ENCODE measurements at regions of chr7 and their contacts with region 1.

Region 1: DNA sequence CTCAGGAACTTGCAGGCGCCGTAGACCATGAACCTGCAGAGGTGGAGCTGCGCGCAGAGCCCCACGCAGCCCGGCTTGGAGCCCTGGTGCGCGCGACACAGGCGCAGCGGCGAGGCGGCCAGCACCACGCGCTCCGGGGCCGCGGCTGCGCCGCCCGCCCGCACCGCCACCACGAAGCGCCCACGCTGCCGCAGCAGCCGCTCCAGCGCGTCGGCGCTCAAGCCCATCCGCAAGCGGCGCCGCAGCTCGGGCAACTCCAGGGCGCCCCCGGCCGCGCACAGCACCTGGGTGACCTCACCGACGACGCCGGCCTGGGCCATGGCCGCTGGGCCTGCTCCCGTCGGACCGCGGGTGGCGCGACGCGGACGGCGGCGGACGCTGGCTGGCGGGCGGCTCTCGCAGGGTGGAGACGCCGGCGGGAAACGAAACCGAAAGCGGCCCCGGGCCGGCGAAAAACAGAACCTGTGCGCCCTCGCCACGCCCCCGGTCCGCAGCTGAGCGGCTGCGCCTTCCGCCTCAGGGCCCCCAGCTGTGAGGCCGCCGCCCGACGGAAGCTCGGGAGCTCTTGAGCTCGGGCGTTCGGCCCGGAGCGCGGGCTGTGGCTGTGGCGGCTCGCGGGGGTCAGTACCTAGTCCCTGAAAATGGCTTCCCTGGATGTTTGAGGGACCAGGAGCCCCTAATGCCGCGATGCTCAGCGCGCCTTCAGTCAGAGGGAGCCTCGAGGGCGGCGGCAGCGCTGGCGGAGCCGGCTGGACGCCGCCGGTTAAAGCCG is at the start of gene PARP12:
- DNase-seq: peak; percentile 88
- H3K4me3 Mint-ChIP-seq: peak within 1 kb of the TSS; percentile 82
- H3K27ac Mint-ChIP-seq: peak within 1 kb of the TSS; percentile 91
- H3K4me1 Mint-ChIP-seq: peaks cover 43% of the 10 kb centered on the region
- H3K27me3 Mint-ChIP-seq: peaks cover 5% of the 10 kb centered on the region
- total RNA-seq, gene PARP12: 62.0 and 63.7 TPM in 2 replicates

Region 2: GRCh38 chr7:140084972-140085371 is 22.3 kb after region 1 on chr7:
- intact Hi-C with region 1: loop called (anchors 2 kb)
- DNase-seq: peak; percentile 36
- H3K4me3 Mint-ChIP-seq: peak overlapping the region; percentile 9
- H3K27ac Mint-ChIP-seq: peak overlapping the region; percentile 76
- H3K4me1 Mint-ChIP-seq: peaks cover 39% of the 10 kb centered on the region
- H3K27me3 Mint-ChIP-seq: no peaks in the 10 kb centered on the region

Region 3: GRCh38 chr7:140304191-140304799 is 241.6 kb after region 1 on chr7:
- intact Hi-C with region 1: loop called (anchors 5 kb)
- DNase-seq: peak; percentile 27
- H3K4me3 Mint-ChIP-seq: no peak overlapping the region
- H3K27ac Mint-ChIP-seq: peak overlapping the region; percentile 78
- H3K4me1 Mint-ChIP-seq: peaks cover 21% of the 10 kb centered on the region
- H3K27me3 Mint-ChIP-seq: no peaks in the 10 kb centered on the region

Region 4: DNA sequence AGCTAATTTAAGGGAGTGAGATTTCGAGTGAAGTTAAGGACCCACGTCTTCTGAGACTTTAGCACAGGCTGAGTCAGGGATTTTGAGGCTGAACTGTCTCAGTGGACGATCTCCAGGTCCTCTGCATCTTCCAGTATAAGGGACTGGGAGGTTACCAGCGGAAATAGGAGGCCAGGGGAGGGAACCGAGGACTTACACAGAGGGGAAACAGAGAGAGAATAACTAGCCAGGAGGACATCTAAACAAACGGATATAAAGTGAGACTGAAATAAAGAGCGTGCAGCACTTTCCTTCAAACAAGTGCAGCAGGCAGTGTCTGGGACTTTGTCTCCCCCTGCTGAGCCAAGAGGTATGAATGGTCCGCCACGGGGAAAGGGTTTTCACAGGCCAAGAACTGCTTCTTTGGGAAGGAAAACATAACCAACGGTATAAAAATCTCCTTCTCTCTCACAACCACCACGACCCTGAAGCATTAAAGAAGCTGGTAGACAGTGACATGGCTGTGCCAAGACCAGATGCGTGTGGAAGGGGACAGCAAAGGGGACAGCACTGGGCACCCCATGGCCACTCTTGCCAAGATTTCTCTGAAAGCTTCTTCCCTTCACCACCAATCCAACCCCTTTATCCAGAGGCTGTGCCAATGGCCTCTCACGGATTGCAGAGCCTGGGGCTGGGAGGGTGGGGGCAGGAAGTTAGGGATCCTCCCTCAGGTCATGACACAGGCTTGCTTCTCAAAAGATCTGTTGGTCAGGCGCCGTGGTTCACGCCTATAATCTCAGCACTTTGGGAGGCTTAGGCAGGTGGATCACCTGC is 263.6 kb after region 1 on chr7:
- intact Hi-C with region 1: loop called (anchors 5 kb)
- DNase-seq: peak; percentile 36
- H3K4me3 Mint-ChIP-seq: no peak overlapping the region
- H3K27ac Mint-ChIP-seq: no peak overlapping the region
- H3K4me1 Mint-ChIP-seq: no peaks in the 10 kb centered on the region
- H3K27me3 Mint-ChIP-seq: no peaks in the 10 kb centered on the region

Region 5: DNA sequence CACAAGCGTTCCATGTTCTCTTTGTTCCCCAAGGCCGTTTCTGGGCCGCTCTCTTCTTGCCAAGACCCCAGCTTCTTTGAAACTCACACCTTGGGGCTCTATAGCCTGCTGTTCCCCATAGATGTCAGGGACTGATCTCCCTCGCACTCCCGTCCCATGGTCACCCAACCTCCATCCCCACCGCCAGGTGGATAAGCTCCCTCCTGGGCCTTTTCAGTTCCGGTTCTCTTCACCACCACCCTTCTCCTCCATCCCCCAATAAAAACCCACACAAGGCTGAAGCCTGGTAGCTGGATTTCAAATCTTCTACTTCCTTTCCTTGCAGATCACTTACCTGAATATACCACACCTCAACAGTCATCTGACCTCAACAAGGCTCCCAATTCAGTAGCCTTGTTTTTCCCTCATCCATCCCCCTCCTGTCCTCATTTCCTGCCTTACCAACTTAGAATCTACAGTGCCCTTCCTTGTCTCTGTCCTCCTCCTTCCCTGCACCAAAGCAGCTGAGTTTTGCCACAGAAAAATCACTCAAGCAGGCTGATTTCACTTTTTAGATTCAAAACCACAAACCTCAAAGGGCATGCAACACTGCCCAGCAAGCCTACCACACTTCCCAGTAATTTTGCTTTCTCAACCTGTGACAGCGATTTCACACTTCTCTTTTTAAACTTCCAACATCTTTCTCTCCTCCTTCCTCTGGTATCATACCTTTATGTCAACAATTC is 327.9 kb after region 1 on chr7:
- intact Hi-C with region 1: loop called (anchors 5 kb)
- DNase-seq: no peak
- H3K4me3 Mint-ChIP-seq: no peak overlapping the region
- H3K27ac Mint-ChIP-seq: no peak overlapping the region
- H3K4me1 Mint-ChIP-seq: peaks cover 2% of the 10 kb centered on the region
- H3K27me3 Mint-ChIP-seq: no peaks in the 10 kb centered on the region